ENCODE measurements at regions of chr2 and their contacts with region 1.

Region 1: GRCh38 chr2:99141110-99142108 is at the start of gene C2orf15:
- DNase-seq: peak; percentile 97
- H3K4me3 ChIP-seq: peak within 1 kb of the TSS; percentile 80 to 81
- H3K27ac ChIP-seq: peak within 1 kb of the TSS in 1 of 2 experiments; percentile 81; a peak in 2 of 4 replicates
- H3K4me1 ChIP-seq: peaks cover 0 to 3% of the 10 kb centered on the region in 2 experiments; a peak in 2 of 4 replicates
- H3K27me3 ChIP-seq: no peaks in the 10 kb centered on the region
- CTCF ChIP-seq: no peak
- EP300 ChIP-seq: no peak
- RAD21 ChIP-seq: no peak
- polyA plus RNA-seq, gene C2orf15: 0.25 and 0.41 TPM in 2 replicates

Region 2: DNA sequence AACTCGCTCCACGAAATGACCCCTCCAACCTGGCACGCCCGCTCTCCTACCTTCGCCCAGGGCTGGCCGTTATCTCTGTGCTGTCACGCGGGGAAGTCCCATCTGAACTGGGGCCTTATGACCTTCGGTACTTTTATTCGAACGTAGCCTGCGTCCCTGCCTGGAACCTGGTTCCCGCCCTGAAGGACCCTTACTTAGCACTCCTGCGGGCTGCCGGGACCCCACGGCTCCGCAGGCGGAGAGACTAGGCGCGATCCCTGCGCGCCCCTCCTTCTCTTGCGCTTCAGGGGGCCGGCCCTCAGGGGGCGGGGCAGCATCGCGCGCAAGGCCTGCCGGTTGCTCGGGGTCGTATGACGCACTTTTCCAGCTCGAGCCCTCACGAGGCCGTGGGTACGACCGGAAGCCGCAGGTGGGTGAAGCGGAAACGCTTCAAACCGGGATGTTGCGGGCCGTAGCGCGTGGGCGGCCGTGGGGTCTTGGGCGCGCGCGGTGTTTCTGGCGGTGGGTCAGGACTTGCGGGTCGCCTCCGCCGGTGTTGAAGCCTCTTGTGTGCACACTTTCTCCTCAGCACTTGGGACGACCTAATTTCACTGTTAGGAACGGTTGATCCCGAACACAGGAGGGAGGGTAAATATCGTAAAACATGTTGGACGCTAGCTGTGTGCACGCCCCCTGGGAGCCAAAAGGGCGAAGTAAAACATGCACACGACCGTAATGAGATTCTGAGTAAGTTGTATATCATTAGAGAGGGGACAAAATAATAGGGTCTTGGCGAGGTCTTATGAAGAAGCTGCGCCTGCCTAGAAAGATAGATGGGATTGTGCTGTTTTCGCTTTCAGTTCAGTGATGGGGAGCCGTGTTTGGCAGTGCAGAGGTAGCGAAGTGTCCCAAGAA is 13.5 kb after region 1 on chr2 and contains the starts of genes LIPT1 and TSGA10:
- CTCF ChIA-PET with region 1: interaction called, 6 read pairs
- POLR2A ChIA-PET with region 1: interaction called, 20 read pairs
- DNase-seq: peak; percentile 98
- H3K4me3 ChIP-seq: peak within 1 kb of the TSS; percentile 83 to 88
- H3K27ac ChIP-seq: peak within 1 kb of the TSS; percentile 78 to 80
- H3K4me1 ChIP-seq: peaks cover 0 to 8% of the 10 kb centered on the region in 2 experiments; a peak in 2 of 4 replicates
- H3K27me3 ChIP-seq: no peaks in the 10 kb centered on the region
- CTCF ChIP-seq: peak; percentile 42
- EP300 ChIP-seq: no peak; a peak in 1 of 4 replicates
- RAD21 ChIP-seq: no peak
- polyA plus RNA-seq, gene LIPT1: 5.4 and 8.7 TPM in 2 replicates
- polyA plus RNA-seq, gene TSGA10: 1.8 and 2.0 TPM in 2 replicates

Region 3: DNA sequence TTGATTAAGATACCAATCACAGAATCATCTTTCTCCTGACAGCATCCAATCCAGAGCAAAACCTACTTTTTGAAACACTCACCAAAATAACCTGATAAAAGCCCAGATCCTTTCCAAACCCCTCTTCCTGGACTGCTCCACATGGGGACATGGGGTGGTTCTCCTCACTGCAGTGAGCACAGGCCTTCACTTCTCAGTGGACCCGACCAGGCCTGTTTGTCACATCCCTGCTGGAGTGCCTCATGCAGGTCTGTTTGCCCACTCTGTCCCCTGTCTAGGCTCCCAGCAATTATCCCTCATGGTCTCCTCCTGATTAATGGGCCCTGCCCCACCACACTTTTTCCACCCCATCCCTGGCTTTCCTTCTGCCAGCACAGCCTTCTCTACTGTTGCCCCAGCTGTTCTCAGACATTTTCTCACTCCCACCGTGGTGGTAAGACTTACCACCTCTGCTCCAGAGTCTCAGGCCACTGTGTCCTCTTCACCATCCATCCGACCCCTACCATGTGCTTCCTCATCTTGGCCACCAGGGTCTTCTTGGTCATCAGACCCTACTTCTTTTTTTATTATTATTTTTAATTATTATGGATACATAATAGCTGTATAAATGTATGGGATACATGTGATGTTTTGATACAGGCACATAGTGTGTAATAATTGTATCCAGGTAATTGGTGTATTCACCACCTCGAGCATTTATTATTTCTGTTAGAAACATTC is 60.7 kb after region 1 on chr2:
- CTCF ChIA-PET with region 1: no interaction called
- POLR2A ChIA-PET with region 1: no interaction called
- DNase-seq: no peak
- H3K4me3 ChIP-seq: no peak overlapping the region
- H3K27ac ChIP-seq: no peak overlapping the region
- H3K4me1 ChIP-seq: no peaks in the 10 kb centered on the region
- H3K27me3 ChIP-seq: no peaks in the 10 kb centered on the region
- CTCF ChIP-seq: 0 out of 2 replicates have a peak, but pooled peaks have one; percentile 16
- EP300 ChIP-seq: no peak
- RAD21 ChIP-seq: no peak

Region 4: DNA sequence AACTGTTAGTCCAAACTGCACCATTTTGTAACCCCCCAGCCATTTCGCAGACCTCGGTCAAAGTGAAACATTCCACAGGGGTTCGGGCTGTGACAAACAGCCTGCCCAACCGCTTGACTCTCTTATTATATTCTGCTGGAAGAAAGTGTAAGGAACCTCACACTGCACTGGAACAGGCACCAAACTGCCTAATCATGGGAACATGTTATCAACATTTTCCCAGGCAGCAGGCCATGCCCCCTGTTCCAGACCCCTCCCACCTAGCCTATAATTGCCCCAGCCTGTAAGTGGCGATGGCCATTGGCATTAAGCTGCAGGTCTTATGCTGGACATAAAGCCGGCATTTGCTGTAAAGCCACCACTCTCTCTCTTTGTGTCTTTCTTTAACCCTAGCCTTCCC is 97.2 kb after region 1 on chr2:
- CTCF ChIA-PET with region 1: no interaction called
- POLR2A ChIA-PET with region 1: no interaction called
- DNase-seq: no peak
- H3K4me3 ChIP-seq: no peak overlapping the region
- H3K27ac ChIP-seq: no peak overlapping the region
- H3K4me1 ChIP-seq: no peaks in the 10 kb centered on the region
- H3K27me3 ChIP-seq: no peaks in the 10 kb centered on the region
- CTCF ChIP-seq: no peak
- EP300 ChIP-seq: no peak
- RAD21 ChIP-seq: no peak